MCF 10A (cell line): ENCODE measurements at regions of chr1 and their contacts with region 1.

Region 1: DNA sequence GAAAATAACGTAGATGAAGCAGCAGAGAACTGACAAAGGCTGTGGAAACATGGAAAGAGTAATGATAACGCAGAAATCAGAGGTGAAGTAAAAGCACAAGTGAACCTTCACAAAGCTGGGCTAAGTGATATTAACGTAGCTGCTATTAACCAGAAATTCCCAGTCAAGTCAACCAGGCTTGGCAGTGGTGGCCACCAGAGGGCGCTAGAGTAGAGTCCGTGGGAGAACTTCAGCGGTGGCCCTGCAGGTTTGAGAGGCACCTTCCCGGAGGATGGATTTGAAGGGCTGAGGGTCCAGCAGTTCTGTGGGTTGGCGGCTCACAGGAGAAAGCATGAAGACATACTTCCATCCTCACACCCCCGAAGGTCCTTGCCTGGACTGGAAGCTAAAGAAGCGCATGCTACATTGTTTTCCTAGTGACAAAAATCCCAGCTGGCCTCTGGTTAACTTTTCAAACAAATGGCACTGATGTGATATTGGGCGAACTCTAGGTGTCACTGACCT is 81.7 kb upstream of the ZNF648 start:
- DNase-seq: peak; percentile 94
- H3K4me3 Mint-ChIP-seq: peak overlapping the region; percentile 28
- H3K27ac Mint-ChIP-seq: peak overlapping the region; percentile 97
- H3K4me1 Mint-ChIP-seq: peaks cover 53% of the 10 kb centered on the region
- H3K27me3 Mint-ChIP-seq: no peaks in the 10 kb centered on the region
- CTCF ChIP-seq: peak; percentile 95

Region 2: GRCh38 chr1:182084487-182085316 is 58.5 kb before region 1 on chr1:
- CTCF ChIA-PET with region 1: interaction called, 175 read pairs
- POLR2A ChIA-PET with region 1: interaction called, 51 read pairs
- intact Hi-C with region 1: loop called (anchors 1 kb)
- DNase-seq: peak; percentile 91
- H3K4me3 Mint-ChIP-seq: no peak overlapping the region
- H3K27ac Mint-ChIP-seq: no peak overlapping the region
- H3K4me1 Mint-ChIP-seq: peaks cover 27% of the 10 kb centered on the region
- H3K27me3 Mint-ChIP-seq: no peaks in the 10 kb centered on the region
- CTCF ChIP-seq: peak; percentile 98

Region 3: GRCh38 chr1:182166750-182167149 is 23.5 kb after region 1 on chr1:
- CTCF ChIA-PET with region 1: interaction called, 163 read pairs
- POLR2A ChIA-PET with region 1: interaction called, 321 read pairs
- intact Hi-C with region 1: no loop called
- DNase-seq: no peak
- H3K4me3 Mint-ChIP-seq: no peak overlapping the region
- H3K27ac Mint-ChIP-seq: no peak overlapping the region
- H3K4me1 Mint-ChIP-seq: peaks cover 6% of the 10 kb centered on the region
- H3K27me3 Mint-ChIP-seq: no peaks in the 10 kb centered on the region
- CTCF ChIP-seq: no peak

Region 4: GRCh38 chr1:182215764-182216163 is 72.6 kb after region 1 on chr1:
- CTCF ChIA-PET with region 1: interaction called, 23 read pairs
- POLR2A ChIA-PET with region 1: interaction called, 98 read pairs
- intact Hi-C with region 1: no loop called
- DNase-seq: peak; percentile 28
- H3K4me3 Mint-ChIP-seq: no peak overlapping the region
- H3K27ac Mint-ChIP-seq: peak overlapping the region; percentile 7
- H3K4me1 Mint-ChIP-seq: peaks cover 32% of the 10 kb centered on the region
- H3K27me3 Mint-ChIP-seq: no peaks in the 10 kb centered on the region
- CTCF ChIP-seq: no peak

Region 5: DNA sequence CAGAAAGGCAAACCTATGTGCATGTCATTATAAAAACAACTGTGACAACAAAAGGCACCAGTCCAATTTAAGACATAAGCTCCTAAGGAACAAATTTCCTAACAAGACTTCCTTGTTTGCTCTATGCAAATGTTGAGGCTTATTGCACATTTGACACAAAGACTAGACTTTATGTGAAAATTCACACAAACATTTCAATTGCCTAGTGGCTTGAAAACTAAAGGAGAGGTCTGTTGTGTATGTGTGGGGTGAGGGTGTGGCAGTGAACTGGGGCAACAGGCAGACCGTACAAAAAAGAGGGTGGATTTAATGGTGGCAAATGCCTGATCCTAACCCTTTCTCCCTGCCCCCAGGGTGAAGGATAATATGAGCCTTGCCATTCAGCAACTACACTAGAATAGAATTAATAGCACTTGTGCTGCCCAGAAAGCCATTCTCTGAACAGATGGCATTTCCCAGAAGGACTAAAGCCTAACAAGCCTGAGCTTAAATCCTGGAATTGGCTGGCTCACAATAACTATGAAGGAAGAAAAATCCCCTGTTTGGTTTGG is 174.5 kb after region 1 on chr1:
- CTCF ChIA-PET with region 1: interaction called, 16 read pairs
- POLR2A ChIA-PET with region 1: interaction called, 3 read pairs
- intact Hi-C with region 1: no loop called
- DNase-seq: no peak
- H3K4me3 Mint-ChIP-seq: no peak overlapping the region
- H3K27ac Mint-ChIP-seq: no peak overlapping the region
- H3K4me1 Mint-ChIP-seq: no peaks in the 10 kb centered on the region
- H3K27me3 Mint-ChIP-seq: no peaks in the 10 kb centered on the region
- CTCF ChIP-seq: no peak

Region 6: GRCh38 chr1:182391362-182392044 is 248.3 kb after region 1 on chr1 and contains the start of gene GLUL:
- CTCF ChIA-PET with region 1: interaction called, 353 read pairs
- POLR2A ChIA-PET with region 1: no interaction called
- intact Hi-C with region 1: loop called (anchors 1 kb)
- DNase-seq: peak; percentile 90
- H3K4me3 Mint-ChIP-seq: peak within 1 kb of the TSS; percentile 100
- H3K27ac Mint-ChIP-seq: peak within 1 kb of the TSS; percentile 100
- H3K4me1 Mint-ChIP-seq: peaks cover 27% of the 10 kb centered on the region
- H3K27me3 Mint-ChIP-seq: no peaks in the 10 kb centered on the region
- CTCF ChIP-seq: peak; percentile 2
- total RNA-seq, gene GLUL: 240 and 437 TPM in 2 replicates

Region 7: GRCh38 chr1:182595641-182596240 is 452.5 kb after region 1 on chr1:
- CTCF ChIA-PET with region 1: interaction called, 3 read pairs
- POLR2A ChIA-PET with region 1: no interaction called
- intact Hi-C with region 1: loop called (anchors 1 kb)
- DNase-seq: peak; percentile 80
- H3K4me3 Mint-ChIP-seq: no peak overlapping the region
- H3K27ac Mint-ChIP-seq: no peak overlapping the region
- H3K4me1 Mint-ChIP-seq: peaks cover 6% of the 10 kb centered on the region
- H3K27me3 Mint-ChIP-seq: no peaks in the 10 kb centered on the region
- CTCF ChIP-seq: peak; percentile 92